Naive thymus-derived CD4-positive, alpha-beta T cell (primary cell): ENCODE measurements at regions of chr3 and their contacts with region 1.

Region 1: DNA sequence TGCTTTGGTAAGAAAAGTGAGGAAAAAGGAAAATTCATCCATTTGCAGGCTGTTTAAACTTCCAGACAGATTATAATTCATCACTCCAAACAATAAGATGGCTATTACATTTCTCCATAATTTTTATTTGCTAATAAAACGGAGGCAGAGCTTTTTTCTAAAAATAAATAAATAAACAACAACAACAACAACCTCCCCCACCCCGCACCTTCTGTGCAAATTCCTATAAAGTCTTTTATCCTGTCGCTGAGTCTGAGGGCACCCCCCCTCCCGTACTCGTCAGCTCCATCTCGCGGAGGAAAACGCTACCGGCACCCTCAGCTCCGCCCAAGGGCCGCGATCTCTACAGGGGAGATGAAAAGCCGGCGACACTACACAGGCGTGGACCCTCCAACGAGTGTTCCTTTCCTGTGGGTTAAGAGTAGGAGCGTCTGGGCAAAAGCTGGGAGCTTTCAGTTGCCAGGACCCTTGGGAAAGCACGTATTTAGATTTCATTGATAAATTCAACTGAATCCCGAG is 1.0 kb upstream of the ATP1B3 start:
- DNase-seq: peak; percentile 58 to 81 (median 77)
- ATAC-seq: peak; percentile 76
- H3K4me3 ChIP-seq: peak overlapping the region; percentile 82
- H3K4me3 Mint-ChIP-seq: peak overlapping the region; percentile 83 to 95 (median 91)
- H3K27ac ChIP-seq: peak overlapping the region; percentile 98
- H3K27ac Mint-ChIP-seq: peak overlapping the region; percentile 76 to 96 (median 89)
- H3K4me1 ChIP-seq: peaks cover 0 to 28% of the 10 kb centered on the region in 2 donors
- H3K4me1 Mint-ChIP-seq: peaks cover 15 to 38% (median 32%) of the 10 kb centered on the region in 7 donors
- H3K27me3 ChIP-seq: no peaks in the 10 kb centered on the region
- H3K27me3 Mint-ChIP-seq: no peaks in the 10 kb centered on the region

Region 2: DNA sequence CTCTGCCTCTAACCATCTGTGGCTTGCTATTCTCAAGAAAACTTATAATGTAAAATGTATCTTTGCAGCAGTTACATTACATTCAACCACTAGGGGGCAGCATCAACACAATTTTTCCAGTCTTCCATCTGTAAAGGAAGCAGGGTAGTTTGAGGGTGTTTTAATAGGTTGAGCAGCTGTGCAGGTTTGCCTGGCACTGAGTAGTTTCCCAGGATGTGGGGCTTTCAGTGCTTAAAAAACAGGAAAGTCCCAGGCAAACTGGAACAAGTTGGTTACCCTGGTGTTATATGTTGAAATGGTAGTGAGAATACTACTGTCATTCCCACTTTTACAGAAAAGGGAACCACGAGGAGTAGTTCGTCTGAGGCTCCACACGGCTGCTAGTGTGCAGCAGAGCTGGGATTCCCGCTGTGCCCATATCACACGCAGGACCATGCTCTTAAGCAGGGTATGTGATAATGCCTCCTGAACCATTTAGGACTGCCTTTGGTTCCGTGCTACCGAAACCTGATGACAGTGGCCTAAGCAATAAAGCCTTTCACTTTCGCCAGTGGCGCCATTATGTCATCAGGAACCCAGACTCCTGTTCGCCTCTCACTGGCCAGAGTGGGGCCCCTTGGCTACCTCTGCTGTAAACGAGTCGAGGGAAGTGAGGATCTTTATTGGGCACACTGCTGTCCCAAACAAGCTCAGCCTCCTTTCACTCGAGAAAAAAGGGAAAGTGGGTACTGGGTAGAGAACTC is 571.8 kb before region 1 on chr3:
- CTCF ChIA-PET with region 1: no interaction called
- POLR2A ChIA-PET with region 1: no interaction called
- intact Hi-C with region 1: loop called in 1 of 2 experiments (anchors 2 kb)
- DNase-seq: peak in 7 of 9 donors; percentile 62 to 84 (median 77)
- ATAC-seq: peak; percentile 77
- H3K4me3 ChIP-seq: no peak overlapping the region
- H3K4me3 Mint-ChIP-seq: peak overlapping the region in 1 of 10 donors; percentile 3
- H3K27ac ChIP-seq: no peak overlapping the region
- H3K27ac Mint-ChIP-seq: peak overlapping the region in 5 of 9 donors; percentile 4 to 84 (median 50)
- H3K4me1 ChIP-seq: peaks cover 20 to 57% of the 10 kb centered on the region in 2 donors
- H3K4me1 Mint-ChIP-seq: peaks cover 30 to 90% (median 80%) of the 10 kb centered on the region in 7 donors
- H3K27me3 ChIP-seq: no peaks in the 10 kb centered on the region
- H3K27me3 Mint-ChIP-seq: peaks cover 0 to 5% (median 0%) of the 10 kb centered on the region in 5 donors

Region 3: DNA sequence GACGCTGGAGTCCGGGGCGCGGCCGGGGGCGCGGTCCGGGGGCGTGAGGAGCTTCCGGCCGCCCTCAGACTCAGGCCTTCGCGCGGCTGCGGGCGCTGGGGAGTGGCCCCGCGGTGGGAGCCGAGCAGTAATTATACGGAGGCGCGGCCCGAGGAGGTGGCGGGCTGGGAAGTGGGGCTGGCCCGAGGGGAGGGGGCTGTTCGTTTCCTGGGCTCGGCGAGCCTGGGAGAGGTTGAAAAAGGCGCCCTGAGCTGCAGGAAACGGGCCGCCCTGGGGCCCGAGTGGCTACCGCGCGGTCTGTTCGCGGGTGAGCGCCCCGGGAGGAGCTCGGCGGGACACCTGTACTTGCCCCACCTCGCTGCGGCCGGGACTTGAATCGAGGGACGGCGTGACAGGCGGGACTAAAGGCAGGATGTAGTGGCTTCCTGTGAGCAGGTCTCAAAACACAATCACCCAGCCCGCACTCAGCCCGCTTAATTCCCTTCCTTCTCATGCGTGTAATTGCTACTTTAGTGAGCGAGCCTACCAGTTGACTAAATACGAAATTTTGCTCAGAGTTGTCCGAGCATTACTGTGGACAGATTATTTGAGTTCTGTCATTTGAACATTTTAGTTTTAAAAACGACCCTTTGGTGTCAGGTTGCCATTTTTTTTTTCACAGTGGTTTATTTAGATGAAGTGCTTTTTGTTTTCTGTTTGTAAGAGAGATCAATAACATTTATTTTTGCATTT is 387.7 kb before region 1 on chr3:
- CTCF ChIA-PET with region 1: no interaction called
- POLR2A ChIA-PET with region 1: no interaction called
- intact Hi-C with region 1: loop called in 1 of 2 experiments (anchors 1 kb)
- DNase-seq: peak in 8 of 9 donors; percentile 65 to 88 (median 86)
- ATAC-seq: peak; percentile 71
- H3K4me3 ChIP-seq: peak overlapping the region; percentile 65
- H3K4me3 Mint-ChIP-seq: peak overlapping the region; percentile 89 to 97 (median 92)
- H3K27ac ChIP-seq: peak overlapping the region; percentile 94
- H3K27ac Mint-ChIP-seq: peak overlapping the region; percentile 90 to 97 (median 93)
- H3K4me1 ChIP-seq: peaks cover 62% of the 10 kb centered on the region in 2 donors
- H3K4me1 Mint-ChIP-seq: peaks cover 53 to 83% (median 74%) of the 10 kb centered on the region in 7 donors
- H3K27me3 ChIP-seq: no peaks in the 10 kb centered on the region
- H3K27me3 Mint-ChIP-seq: no peaks in the 10 kb centered on the region

Region 4: GRCh38 chr3:141796081-141796888 is 79.1 kb before region 1 on chr3:
- CTCF ChIA-PET with region 1: interaction called, 12 read pairs
- POLR2A ChIA-PET with region 1: interaction called, 44 read pairs
- intact Hi-C with region 1: loop called (anchors 1 kb)
- DNase-seq: peak; percentile 14 to 78 (median 61)
- ATAC-seq: peak; percentile 82
- H3K4me3 ChIP-seq: peak overlapping the region; percentile 68
- H3K4me3 Mint-ChIP-seq: peak overlapping the region; percentile 86 to 97 (median 90)
- H3K27ac ChIP-seq: peak overlapping the region; percentile 79
- H3K27ac Mint-ChIP-seq: peak overlapping the region; percentile 92 to 99 (median 97)
- H3K4me1 ChIP-seq: peaks cover 48 to 56% of the 10 kb centered on the region in 2 donors
- H3K4me1 Mint-ChIP-seq: peaks cover 45 to 71% (median 60%) of the 10 kb centered on the region in 7 donors
- H3K27me3 ChIP-seq: no peaks in the 10 kb centered on the region
- H3K27me3 Mint-ChIP-seq: peaks cover 0 to 2% (median 0%) of the 10 kb centered on the region in 5 donors

Region 5: DNA sequence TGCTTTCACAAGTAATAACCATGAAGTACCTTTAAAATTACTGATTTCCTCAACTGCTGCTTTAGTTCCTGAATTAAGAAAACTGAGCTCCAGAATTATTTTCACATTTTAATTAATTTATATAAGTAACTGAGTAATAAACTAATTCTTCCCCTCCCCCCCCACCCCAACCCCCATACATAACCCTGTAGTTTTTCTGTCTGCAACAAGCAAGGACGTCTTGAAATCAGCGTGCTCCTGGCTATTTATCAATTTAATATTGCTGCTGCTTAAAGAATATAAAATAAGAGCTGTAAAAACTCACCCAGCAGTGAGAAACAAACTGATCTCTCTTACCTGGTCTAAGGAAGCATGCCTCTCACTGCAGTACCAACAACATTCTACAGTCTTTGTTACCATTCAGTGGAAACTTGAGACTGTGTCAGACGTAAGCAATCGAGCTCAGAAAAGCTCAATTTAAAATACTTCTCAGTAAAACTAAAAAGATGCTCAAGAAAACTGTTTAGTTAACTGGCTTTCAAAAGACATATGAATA is 152.9 kb after region 1 on chr3:
- CTCF ChIA-PET with region 1: no interaction called
- POLR2A ChIA-PET with region 1: no interaction called
- intact Hi-C with region 1: loop called in 1 of 2 experiments (anchors 10 kb)
- DNase-seq: peak in 7 of 9 donors; percentile 45 to 72 (median 63)
- ATAC-seq: peak; percentile 90
- H3K4me3 ChIP-seq: peak overlapping the region; percentile 47
- H3K4me3 Mint-ChIP-seq: peak overlapping the region; percentile 81 to 97 (median 90)
- H3K27ac ChIP-seq: peak overlapping the region; percentile 57
- H3K27ac Mint-ChIP-seq: peak overlapping the region; percentile 49 to 92 (median 82)
- H3K4me1 ChIP-seq: no peaks in the 10 kb centered on the region
- H3K4me1 Mint-ChIP-seq: peaks cover 13 to 50% (median 49%) of the 10 kb centered on the region in 7 donors
- H3K27me3 ChIP-seq: no peaks in the 10 kb centered on the region
- H3K27me3 Mint-ChIP-seq: no peaks in the 10 kb centered on the region

Region 6: GRCh38 chr3:142578327-142579223 is 703.1 kb after region 1 on chr3 and contains the start of gene ATR:
- CTCF ChIA-PET with region 1: no interaction called
- POLR2A ChIA-PET with region 1: no interaction called
- intact Hi-C with region 1: loop called in 1 of 2 experiments (anchors 1 kb)
- DNase-seq: peak; percentile 89 to 96 (median 95)
- ATAC-seq: peak; percentile 96
- H3K4me3 ChIP-seq: peak within 1 kb of the TSS; percentile 97
- H3K4me3 Mint-ChIP-seq: peak within 1 kb of the TSS; percentile 93 to 99 (median 97)
- H3K27ac ChIP-seq: peak within 1 kb of the TSS; percentile 94
- H3K27ac Mint-ChIP-seq: peak within 1 kb of the TSS; percentile 96 to 99 (median 98)
- H3K4me1 ChIP-seq: peaks cover 25 to 26% of the 10 kb centered on the region in 2 donors
- H3K4me1 Mint-ChIP-seq: peaks cover 45 to 60% (median 54%) of the 10 kb centered on the region in 7 donors
- H3K27me3 ChIP-seq: no peaks in the 10 kb centered on the region
- H3K27me3 Mint-ChIP-seq: peaks cover 0 to 20% (median 0%) of the 10 kb centered on the region in 5 donors
- total RNA-seq, gene ATR: 31.3 to 48.3 (median 36.2) TPM